ENCODE measurements at regions of chr1 and their contacts with region 1.

Region 1: GRCh38 chr1:94463765-94464330 is 45.7 kb downstream of the ABCD3 start:
- DNase-seq: no peak

Region 2: GRCh38 chr1:94186946-94187345 is 276.9 kb before region 1 on chr1:
- intact Hi-C with region 1: loop called in 1 of 2 experiments (anchors 5 kb)
- DNase-seq: no peak

Region 3: GRCh38 chr1:94739521-94740061 is 275.7 kb after region 1 on chr1:
- intact Hi-C with region 1: no loop called
- DNase-seq: peak; percentile 94